ENCODE measurements at regions of chr5 and their contacts with region 1.

Region 1: DNA sequence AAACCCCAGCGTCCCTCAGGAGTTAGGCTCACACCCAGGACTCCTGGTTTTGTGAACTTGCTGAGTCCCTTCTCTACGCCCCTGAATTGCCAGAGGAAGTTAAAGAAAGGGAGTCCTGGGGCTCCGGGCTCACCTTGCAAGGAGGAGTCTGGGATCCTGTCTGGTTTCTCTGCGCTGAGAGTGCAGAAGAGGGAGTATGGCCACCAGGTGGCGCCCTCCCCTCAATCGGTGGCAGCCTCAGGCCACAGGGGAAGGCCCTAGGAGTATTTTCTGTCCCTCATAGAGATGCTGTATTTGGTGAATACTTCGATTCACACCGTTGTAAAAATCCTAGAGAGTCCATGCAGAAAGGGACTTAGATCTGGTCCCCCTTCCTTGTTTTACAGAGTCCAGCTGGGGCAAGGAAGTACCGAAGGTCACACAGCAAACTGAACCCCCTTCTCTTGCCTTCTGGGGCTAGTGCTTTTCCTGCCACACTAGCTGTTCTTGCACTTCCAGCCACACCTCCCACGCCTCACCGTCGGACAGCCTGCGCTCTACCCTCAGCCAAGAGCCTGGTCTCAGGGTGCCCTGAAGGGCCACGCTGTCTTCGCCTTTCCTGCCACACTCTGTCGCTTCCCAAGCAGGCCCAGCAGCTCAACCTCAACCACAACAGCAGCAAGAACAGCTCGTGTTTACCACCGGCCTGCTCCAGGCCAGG is 10.2 kb downstream of the HAND1 start:
- DNase-seq: peak; percentile 82
- ATAC-seq: peak; percentile 98
- H3K4me3 Mint-ChIP-seq: no peak overlapping the region
- H3K27ac Mint-ChIP-seq: no peak overlapping the region
- H3K4me1 Mint-ChIP-seq: no peaks in the 10 kb centered on the region
- H3K27me3 Mint-ChIP-seq: peaks cover 33% of the 10 kb centered on the region

Region 2: GRCh38 chr5:154356020-154356655 is 111.7 kb before region 1 on chr5:
- CTCF ChIA-PET with region 1: no interaction called
- POLR2A ChIA-PET with region 1: no interaction called
- DNase-seq: no peak
- ATAC-seq: no peak
- H3K4me3 Mint-ChIP-seq: no peak overlapping the region
- H3K27ac Mint-ChIP-seq: no peak overlapping the region
- H3K4me1 Mint-ChIP-seq: peaks cover 18% of the 10 kb centered on the region
- H3K27me3 Mint-ChIP-seq: no peaks in the 10 kb centered on the region

Region 3: DNA sequence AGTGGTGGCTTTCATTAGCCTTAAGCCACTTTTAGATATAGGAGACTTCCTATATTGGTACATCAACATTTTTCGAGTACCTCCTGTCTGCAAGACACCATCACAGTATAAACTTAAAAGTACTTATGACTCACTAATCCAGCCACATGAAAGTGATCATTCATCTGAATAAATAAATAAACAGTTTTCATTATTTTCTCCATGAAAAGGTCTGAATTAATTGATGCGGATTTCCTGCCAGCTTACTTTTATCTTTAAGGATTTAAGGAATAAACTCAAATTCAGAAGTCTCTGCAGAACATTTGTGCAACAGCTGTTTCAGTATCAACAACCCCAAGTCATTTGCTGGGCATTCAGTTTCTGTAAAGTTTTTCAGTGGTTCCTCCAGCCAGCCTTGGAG is 18.0 kb before region 1 on chr5:
- CTCF ChIA-PET with region 1: interaction called, 19 read pairs
- POLR2A ChIA-PET with region 1: no interaction called
- DNase-seq: no peak
- ATAC-seq: no peak
- H3K4me3 Mint-ChIP-seq: no peak overlapping the region
- H3K27ac Mint-ChIP-seq: no peak overlapping the region
- H3K4me1 Mint-ChIP-seq: peaks cover 34% of the 10 kb centered on the region
- H3K27me3 Mint-ChIP-seq: no peaks in the 10 kb centered on the region

Region 4: DNA sequence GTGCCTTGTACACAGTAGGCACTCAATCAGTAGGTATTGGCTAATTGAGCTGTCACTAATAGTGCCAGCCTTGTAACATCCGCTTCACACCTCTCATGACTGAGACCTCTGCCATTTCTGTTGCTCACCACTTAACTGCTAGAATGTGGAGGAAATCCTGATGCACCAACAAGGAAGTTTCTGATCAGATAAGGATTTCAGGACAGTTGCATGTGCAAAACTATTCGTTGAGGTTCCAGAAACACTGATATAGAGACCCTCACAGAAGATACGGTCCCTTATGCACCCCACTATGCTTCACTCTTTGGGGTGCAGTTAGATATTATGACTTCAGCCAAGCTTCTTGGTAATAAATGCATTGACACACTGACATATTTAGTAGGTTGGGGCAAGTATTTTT is 11.3 kb before region 1 on chr5:
- CTCF ChIA-PET with region 1: interaction called, 12 read pairs
- POLR2A ChIA-PET with region 1: no interaction called
- DNase-seq: no peak
- ATAC-seq: no peak
- H3K4me3 Mint-ChIP-seq: no peak overlapping the region
- H3K27ac Mint-ChIP-seq: no peak overlapping the region
- H3K4me1 Mint-ChIP-seq: no peaks in the 10 kb centered on the region
- H3K27me3 Mint-ChIP-seq: no peaks in the 10 kb centered on the region

Region 5: DNA sequence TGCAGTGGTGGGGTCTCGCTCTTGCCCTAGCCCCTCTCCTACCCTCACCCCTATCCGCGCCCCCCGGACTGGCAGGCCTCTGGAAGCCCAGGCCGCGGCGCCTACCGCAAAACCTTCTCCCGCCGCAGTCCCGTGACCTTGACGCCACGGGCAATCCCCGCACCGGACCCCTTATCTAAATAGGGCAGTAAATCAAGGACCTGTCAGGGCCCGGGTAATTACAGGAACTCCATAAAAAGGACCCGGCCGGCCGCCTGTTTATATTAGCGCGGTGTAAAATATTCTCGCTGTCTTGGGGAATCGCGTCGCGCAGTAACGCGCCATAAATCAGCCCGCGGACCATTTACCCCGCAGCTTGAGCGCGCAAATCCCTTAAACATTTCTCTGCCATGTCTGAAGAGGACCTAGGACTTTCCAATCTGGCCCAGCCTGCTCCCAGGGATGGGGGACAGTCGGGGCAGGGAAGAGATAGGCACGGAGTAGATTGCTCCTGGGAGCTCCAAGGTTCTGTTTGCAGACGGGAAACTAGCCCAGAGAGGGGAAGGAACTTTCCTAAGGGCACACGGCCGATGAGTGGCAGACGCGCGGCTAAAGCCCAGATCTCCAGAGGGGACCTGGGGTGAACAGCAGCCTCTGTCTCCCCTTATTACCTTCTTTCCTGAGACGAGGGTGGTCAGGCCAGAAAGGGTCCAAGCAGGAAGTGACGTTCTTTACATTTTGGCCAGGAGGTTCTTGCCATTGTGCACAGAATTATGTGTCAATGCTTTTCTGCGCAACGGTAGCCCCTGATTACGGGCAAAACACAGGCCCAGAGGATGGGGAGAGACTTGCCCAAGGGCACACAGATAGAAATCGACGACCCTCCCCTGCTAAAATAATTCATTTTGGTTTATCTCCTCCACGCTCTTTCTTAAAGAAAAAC is 15.0 kb after region 1 on chr5:
- CTCF ChIA-PET with region 1: interaction called, 10 read pairs
- POLR2A ChIA-PET with region 1: no interaction called
- DNase-seq: no peak
- ATAC-seq: no peak
- H3K4me3 Mint-ChIP-seq: no peak overlapping the region
- H3K27ac Mint-ChIP-seq: no peak overlapping the region
- H3K4me1 Mint-ChIP-seq: peaks cover 3% of the 10 kb centered on the region
- H3K27me3 Mint-ChIP-seq: peaks cover 89% of the 10 kb centered on the region

Measured in activated CD8-positive, alpha-beta T cell treated with anti-CD3 and anti-CD28 coated beads, Interleukin-2, amount 10 ng/mL, durations not matched to agents 7 days and 5 days (primary cell).